Panc1 (cell line): ENCODE measurements at regions of chr5 and their contacts with region 1.

Region 1: GRCh38 chr5:26700759-26701384 is 337.5 kb downstream of the CDH9 start:
- DNase-seq: peak; percentile 43
- ATAC-seq: peak; percentile 76; the same call in 1 of the 2 replicates
- H3K4me3 ChIP-seq: no peak overlapping the region
- H3K27ac ChIP-seq: no peak overlapping the region
- H3K4me1 ChIP-seq: no peaks in the 10 kb centered on the region
- H3K27me3 ChIP-seq: no peaks in the 10 kb centered on the region
- CTCF ChIP-seq: peak; percentile 61; the same call in 1 of the 2 replicates

Region 2: DNA sequence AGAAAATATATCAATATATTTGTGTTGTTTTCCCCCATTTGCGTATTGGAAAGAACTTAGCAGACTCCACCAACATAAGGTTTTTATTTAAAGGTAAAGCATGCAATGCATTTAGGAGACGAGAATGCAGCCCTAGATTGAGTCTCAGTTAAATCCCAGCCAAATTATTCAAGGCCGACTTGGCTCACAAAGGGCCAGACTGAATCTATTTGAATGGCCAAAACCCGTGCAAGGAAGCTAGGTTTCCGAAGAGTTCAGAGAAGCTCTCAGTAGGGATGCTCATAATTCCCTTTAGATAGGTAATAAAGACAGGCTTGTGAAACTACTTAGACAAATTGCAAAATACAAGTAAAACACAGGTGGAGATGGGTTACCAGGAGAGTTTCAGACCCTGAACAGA is 182.8 kb before region 1 on chr5:
- CTCF ChIA-PET with region 1: interaction called, 13 read pairs
- POLR2A ChIA-PET with region 1: no interaction called
- in situ Hi-C with region 1: no loop called
- intact Hi-C with region 1: no loop called
- DNase-seq: no peak
- ATAC-seq: no peak
- H3K4me3 ChIP-seq: no peak overlapping the region
- H3K27ac ChIP-seq: no peak overlapping the region
- H3K4me1 ChIP-seq: no peaks in the 10 kb centered on the region
- H3K27me3 ChIP-seq: no peaks in the 10 kb centered on the region
- CTCF ChIP-seq: no peak

Region 3: DNA sequence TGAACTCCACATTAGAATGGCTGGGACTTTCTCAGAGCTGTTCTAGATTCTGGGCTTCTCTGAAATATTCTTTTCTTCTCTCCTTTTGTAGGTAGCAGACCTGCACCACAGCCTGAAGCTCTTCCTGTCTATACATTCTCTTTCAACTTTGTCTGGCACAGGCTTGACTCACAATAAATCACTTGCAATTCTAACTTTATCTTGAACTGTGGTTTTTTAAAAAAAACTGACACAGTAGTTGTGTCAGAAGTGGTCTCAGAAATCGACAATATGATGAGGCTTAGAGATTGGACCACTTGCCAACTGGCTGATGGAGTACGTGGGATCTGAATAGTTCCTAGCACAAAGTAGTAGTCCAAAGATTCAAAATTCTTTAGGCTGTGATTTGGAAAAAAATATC is 361.6 kb after region 1 on chr5:
- CTCF ChIA-PET with region 1: no interaction called
- POLR2A ChIA-PET with region 1: no interaction called
- in situ Hi-C with region 1: no loop called
- intact Hi-C with region 1: no loop called
- DNase-seq: no peak
- ATAC-seq: no peak
- H3K4me3 ChIP-seq: no peak overlapping the region
- H3K27ac ChIP-seq: no peak overlapping the region
- H3K4me1 ChIP-seq: no peaks in the 10 kb centered on the region
- H3K27me3 ChIP-seq: no peaks in the 10 kb centered on the region
- CTCF ChIP-seq: no peak